Activated B cell treated with CpG ODN at 0.5 μM for 24 hours (primary cell): ENCODE measurements at regions of chr2 and their contacts with region 1.

Region 1: DNA sequence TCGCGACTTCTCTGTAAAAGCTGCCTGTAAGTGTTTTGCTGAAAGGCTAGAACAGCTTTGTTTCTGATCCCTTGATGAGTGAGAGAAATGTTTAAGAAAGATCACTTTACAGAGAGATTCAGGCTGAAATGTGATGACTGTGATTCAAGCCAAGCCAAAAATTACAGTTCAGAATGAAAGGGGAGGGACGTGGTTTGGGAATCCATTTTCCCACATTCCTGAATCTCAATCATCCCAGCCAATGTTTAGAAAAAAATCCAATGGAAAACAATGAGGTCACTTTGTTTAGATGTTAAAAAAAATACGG is 416.7 kb downstream of the ARHGAP15 start:
- DNase-seq: no peak
- ATAC-seq: no peak
- H3K4me3 Mint-ChIP-seq: no peak overlapping the region
- H3K27ac Mint-ChIP-seq: peak overlapping the region; percentile 26
- H3K4me1 Mint-ChIP-seq: peaks cover 2% of the 10 kb centered on the region
- H3K27me3 Mint-ChIP-seq: no peaks in the 10 kb centered on the region
- CTCF ChIP-seq: no peak

Region 2: DNA sequence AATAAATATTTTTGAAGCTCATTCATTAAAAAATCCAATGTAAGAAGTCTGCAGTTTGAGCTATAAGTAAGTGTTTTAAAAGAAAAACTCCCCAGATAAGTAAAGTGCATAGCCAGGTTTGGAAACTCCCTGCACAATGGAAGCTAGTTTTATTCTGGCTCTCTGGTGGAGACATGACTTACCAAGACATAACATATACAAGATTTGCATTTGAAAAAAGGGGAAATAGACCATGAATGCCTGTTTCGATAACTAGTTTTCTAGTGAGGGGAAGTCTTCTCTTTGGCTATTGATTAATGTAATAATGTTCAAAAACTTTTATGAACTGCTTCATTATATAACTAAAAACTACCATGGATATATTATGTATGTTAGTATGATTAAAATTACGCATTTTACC is 18.5 kb after region 1 on chr2:
- CTCF ChIA-PET with region 1: no interaction called
- POLR2A ChIA-PET with region 1: no interaction called
- intact Hi-C with region 1: loop called (anchors 2 kb)
- DNase-seq: no peak
- ATAC-seq: no peak
- H3K4me3 Mint-ChIP-seq: no peak overlapping the region
- H3K27ac Mint-ChIP-seq: no peak overlapping the region
- H3K4me1 Mint-ChIP-seq: peaks cover 18% of the 10 kb centered on the region
- H3K27me3 Mint-ChIP-seq: no peaks in the 10 kb centered on the region
- CTCF ChIP-seq: no peak